ENCODE measurements at regions of chr6 and their contacts with region 1.

Region 1: DNA sequence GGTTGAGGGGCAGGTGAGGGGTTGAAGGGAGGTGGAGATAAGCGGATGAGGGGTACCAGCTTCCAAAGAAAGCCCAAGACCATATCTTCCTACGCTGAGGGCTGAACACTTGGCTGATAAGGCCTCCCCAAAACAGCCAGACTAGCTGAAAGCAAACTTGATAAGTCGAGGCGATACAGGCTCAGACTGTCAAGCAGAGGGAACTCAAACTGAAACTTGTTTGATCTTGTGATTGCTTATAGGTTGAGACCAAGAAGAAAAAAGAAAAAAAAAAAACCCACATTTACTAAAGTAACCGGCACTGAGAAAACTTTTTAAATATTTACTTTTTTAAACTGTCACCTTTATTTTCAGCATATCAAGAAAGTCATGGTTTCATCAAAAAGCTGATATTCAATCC is 73.6 kb downstream of the TRERF1 start:
- DNase-seq: no peak
- ATAC-seq: peak; percentile 78
- H3K4me3 ChIP-seq: no peak overlapping the region
- H3K27ac ChIP-seq: peak overlapping the region; percentile 56
- H3K4me1 ChIP-seq: peaks cover 37% of the 10 kb centered on the region
- H3K27me3 ChIP-seq: no peaks in the 10 kb centered on the region
- CTCF ChIP-seq: no peak
- EP300 ChIP-seq: no peak
- POLR2A ChIP-seq: no peak
- RAD21 ChIP-seq: no peak

Region 2: DNA sequence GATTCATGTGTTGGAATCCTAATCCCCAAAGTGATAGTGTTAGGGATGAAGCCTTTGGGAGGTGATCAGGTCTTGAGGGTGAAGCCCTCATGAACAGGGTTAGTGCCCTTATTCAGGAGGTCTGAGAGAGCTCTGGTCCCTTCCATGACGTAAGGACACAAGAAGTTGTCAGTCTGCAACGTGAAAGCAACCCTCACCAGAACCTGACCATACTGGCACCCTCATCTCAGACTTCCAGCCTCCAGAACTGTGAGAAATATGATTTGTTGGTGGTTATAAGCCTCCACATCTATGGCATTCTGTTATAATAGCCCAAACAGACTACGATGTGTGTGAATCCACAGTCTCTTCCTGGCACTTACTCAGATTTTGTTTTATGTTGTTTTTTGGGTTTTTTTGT is 17.1 kb before region 1 on chr6:
- CTCF ChIA-PET with region 1: no interaction called
- POLR2A ChIA-PET with region 1: interaction called, 10 read pairs
- RAD21 ChIA-PET with region 1: interaction called, 24 read pairs
- SMC1A ChIA-PET with region 1: interaction called, 13 read pairs
- in situ Hi-C with region 1: no loop called
- intact Hi-C with region 1: no loop called
- DNase-seq: no peak
- ATAC-seq: no peak
- H3K4me3 ChIP-seq: no peak overlapping the region
- H3K27ac ChIP-seq: no peak overlapping the region
- H3K4me1 ChIP-seq: peaks cover 8% of the 10 kb centered on the region
- H3K27me3 ChIP-seq: no peaks in the 10 kb centered on the region
- CTCF ChIP-seq: no peak
- EP300 ChIP-seq: no peak
- POLR2A ChIP-seq: no peak
- RAD21 ChIP-seq: no peak